ENCODE measurements at regions of chr17 and their contacts with region 1.

Region 1: DNA sequence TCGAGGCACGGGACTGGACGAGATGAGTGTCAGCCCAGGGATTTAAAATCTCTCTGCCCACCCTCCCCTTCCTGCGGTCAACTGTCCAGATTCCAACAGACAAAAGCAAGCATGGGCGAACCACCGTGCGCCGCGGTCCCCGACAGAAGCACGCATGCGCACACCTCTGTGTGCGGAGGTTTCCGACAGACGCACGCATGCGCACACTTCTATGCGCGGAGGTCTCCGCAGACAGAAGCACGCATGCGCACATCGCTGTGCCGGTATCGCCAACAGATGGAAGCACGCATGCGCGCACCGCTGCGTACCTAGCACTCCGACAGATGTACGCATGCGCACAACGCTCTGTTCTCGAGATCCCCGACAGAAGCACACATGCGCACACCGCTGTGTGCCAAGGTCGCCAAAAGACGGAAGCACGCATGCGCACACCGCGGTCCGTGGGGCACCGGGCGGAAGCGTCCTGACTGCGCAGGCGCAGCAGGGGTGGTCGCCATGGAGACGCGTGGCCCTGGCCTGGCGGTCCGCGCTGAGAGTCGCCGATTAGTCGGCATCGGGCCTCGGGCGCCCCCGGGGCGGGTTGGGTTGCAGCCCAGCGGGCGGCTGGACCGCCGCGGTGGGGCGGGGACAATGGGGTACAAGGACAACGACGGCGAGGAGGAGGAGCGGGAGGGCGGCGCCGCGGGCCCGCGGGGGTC is 57.4 kb upstream of the RPH3AL start:
- DNase-seq: peak; percentile 100
- H3K4me3 ChIP-seq: peak overlapping the region; percentile 4 to 90 (median 41)
- H3K27ac ChIP-seq: peak overlapping the region; percentile 4
- H3K4me1 ChIP-seq: peaks cover 5% of the 10 kb centered on the region
- H3K27me3 ChIP-seq: no peaks in the 10 kb centered on the region
- CTCF ChIP-seq: no peak
- POLR2A ChIP-seq: peak; percentile 75

Region 2: GRCh38 chr17:385926-386876 is 23.8 kb before region 1 on chr17:
- CTCF ChIA-PET with region 1: interaction called, 10 read pairs
- POLR2A ChIA-PET with region 1: no interaction called
- dilution Hi-C with region 1: no loop called
- intact Hi-C with region 1: no loop called
- DNase-seq: peak; percentile 34
- H3K4me3 ChIP-seq: peak overlapping the region in 1 of 3 experiments; percentile 31
- H3K27ac ChIP-seq: no peak overlapping the region
- H3K4me1 ChIP-seq: peaks cover 5% of the 10 kb centered on the region
- H3K27me3 ChIP-seq: no peaks in the 10 kb centered on the region
- CTCF ChIP-seq: peak; percentile 30 to 58
- POLR2A ChIP-seq: no peak

Region 3: DNA sequence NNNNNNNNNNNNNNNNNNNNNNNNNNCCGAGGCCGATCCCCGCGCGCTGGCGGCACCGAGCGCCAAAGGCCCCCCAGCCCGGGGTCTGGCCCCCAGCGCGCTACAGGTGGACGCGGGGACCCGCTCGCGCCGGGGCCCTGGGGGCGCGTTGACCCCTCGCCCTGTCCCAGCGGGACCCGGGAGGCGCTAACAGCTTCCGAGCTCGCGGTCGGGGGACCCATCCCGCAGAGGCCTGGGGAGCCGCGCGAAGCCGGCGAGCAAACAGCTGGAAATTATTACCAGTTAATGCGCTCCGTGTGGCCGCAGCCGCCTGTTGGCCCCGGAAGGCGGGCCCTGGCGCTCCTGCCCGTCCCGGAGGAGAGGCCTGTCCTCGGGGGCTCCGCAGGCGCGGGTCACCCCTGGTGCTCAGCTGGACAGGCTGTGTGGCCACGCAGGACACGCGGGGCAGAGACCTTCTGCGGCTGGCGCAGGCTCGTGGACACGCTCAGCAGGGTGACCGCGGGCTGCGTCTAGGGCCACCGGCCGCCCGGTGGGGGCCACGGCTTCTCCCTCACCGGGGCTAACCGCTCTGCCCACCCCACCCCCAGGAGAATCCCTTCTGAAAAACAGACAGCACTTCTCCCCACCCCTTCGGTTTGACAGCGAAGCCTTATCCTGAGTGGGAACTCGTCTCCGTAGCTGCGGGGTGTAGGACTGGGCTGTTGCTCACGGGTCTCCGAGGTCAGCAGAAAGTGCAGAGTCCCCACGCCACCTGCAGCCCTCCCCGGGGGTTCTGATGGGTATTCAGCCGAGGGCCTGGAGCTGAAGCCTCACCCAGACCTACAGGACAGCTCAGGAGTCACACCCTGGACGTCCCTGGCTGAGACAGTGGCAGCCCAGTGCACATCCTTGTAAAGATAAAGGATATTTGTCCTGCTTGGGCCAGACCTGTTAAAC is 81.4 kb after region 1 on chr17:
- CTCF ChIA-PET with region 1: interaction called, 10 read pairs
- POLR2A ChIA-PET with region 1: no interaction called
- dilution Hi-C with region 1: no loop called
- intact Hi-C with region 1: no loop called
- DNase-seq: peak; percentile 42
- H3K4me3 ChIP-seq: peak overlapping the region; percentile 37 to 40 (median 39)
- H3K27ac ChIP-seq: no peak overlapping the region
- H3K4me1 ChIP-seq: peaks cover 5% of the 10 kb centered on the region
- H3K27me3 ChIP-seq: no peaks in the 10 kb centered on the region
- CTCF ChIP-seq: peak in 1 of 2 donors; percentile 3
- POLR2A ChIP-seq: no peak

Region 4: GRCh38 chr17:565521-565920 is 155.5 kb after region 1 on chr17:
- CTCF ChIA-PET with region 1: interaction called, 29 read pairs
- POLR2A ChIA-PET with region 1: interaction called, 3 read pairs
- dilution Hi-C with region 1: no loop called
- intact Hi-C with region 1: loop called (anchors 2 kb)
- DNase-seq: no peak
- H3K4me3 ChIP-seq: no peak overlapping the region
- H3K27ac ChIP-seq: no peak overlapping the region
- H3K4me1 ChIP-seq: peaks cover 27% of the 10 kb centered on the region
- H3K27me3 ChIP-seq: no peaks in the 10 kb centered on the region
- CTCF ChIP-seq: peak; percentile 23 to 44
- POLR2A ChIP-seq: no peak

Region 5: GRCh38 chr17:681738-682529 is 271.9 kb after region 1 on chr17:
- CTCF ChIA-PET with region 1: interaction called, 73 read pairs
- POLR2A ChIA-PET with region 1: interaction called, 3 read pairs
- dilution Hi-C with region 1: no loop called
- intact Hi-C with region 1: no loop called
- DNase-seq: no peak
- H3K4me3 ChIP-seq: no peak overlapping the region
- H3K27ac ChIP-seq: no peak overlapping the region
- H3K4me1 ChIP-seq: no peaks in the 10 kb centered on the region
- H3K27me3 ChIP-seq: no peaks in the 10 kb centered on the region
- CTCF ChIP-seq: no peak
- POLR2A ChIP-seq: no peak

Region 6: DNA sequence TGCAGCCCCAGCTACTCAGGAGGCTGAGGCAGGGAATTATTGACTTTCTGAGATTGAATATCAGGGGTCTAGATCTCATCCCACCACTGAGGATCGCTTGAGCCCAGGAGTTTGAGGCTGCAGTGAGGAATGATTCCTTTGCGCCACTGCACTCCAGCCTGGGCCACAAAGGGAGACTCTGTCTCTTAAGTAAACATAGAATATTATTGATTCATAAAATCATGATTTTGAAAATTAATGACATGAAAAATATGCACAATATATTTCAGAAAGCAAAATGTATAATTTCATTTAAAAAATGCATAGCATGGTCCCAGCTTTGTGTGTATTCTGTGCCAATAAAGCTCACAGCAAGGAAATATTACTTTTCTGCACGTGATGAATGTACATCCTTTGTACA is 306.2 kb after region 1 on chr17:
- CTCF ChIA-PET with region 1: interaction called, 21 read pairs
- POLR2A ChIA-PET with region 1: no interaction called
- dilution Hi-C with region 1: no loop called
- intact Hi-C with region 1: no loop called
- DNase-seq: no peak
- H3K4me3 ChIP-seq: no peak overlapping the region
- H3K27ac ChIP-seq: no peak overlapping the region
- H3K4me1 ChIP-seq: peaks cover 19% of the 10 kb centered on the region
- H3K27me3 ChIP-seq: no peaks in the 10 kb centered on the region
- CTCF ChIP-seq: no peak
- POLR2A ChIP-seq: no peak

Region 7: GRCh38 chr17:1055751-1056645 is 646.0 kb after region 1 on chr17:
- CTCF ChIA-PET with region 1: interaction called, 11 read pairs
- POLR2A ChIA-PET with region 1: no interaction called
- dilution Hi-C with region 1: no loop called
- intact Hi-C with region 1: no loop called
- DNase-seq: peak; percentile 66
- H3K4me3 ChIP-seq: no peak overlapping the region
- H3K27ac ChIP-seq: no peak overlapping the region
- H3K4me1 ChIP-seq: no peaks in the 10 kb centered on the region
- H3K27me3 ChIP-seq: no peaks in the 10 kb centered on the region
- CTCF ChIP-seq: peak; percentile 58 to 81
- POLR2A ChIP-seq: no peak